ENCODE measurements at regions of chr12 and their contacts with region 1.

Region 1: GRCh38 chr12:42589465-42590329 is at the start of gene PRICKLE1:
- DNase-seq: peak; percentile 69
- H3K4me3 ChIP-seq: peak within 1 kb of the TSS; percentile 81 to 99 (median 86)
- H3K27ac ChIP-seq: peak within 1 kb of the TSS; percentile 59
- H3K4me1 ChIP-seq: peaks cover 38% of the 10 kb centered on the region
- H3K27me3 ChIP-seq: no peaks in the 10 kb centered on the region
- CTCF ChIP-seq: no peak
- POLR2A ChIP-seq: peak; percentile 68
- total RNA-seq, gene PRICKLE1: 69.0 and 86.0 TPM in 2 replicates

Region 2: GRCh38 chr12:42552822-42553221 is 36.9 kb before region 1 on chr12:
- CTCF ChIA-PET with region 1: no interaction called
- POLR2A ChIA-PET with region 1: no interaction called
- dilution Hi-C with region 1: no loop called
- intact Hi-C with region 1: no loop called
- DNase-seq: no peak
- H3K4me3 ChIP-seq: no peak overlapping the region
- H3K27ac ChIP-seq: no peak overlapping the region
- H3K4me1 ChIP-seq: no peaks in the 10 kb centered on the region
- H3K27me3 ChIP-seq: no peaks in the 10 kb centered on the region
- CTCF ChIP-seq: no peak
- POLR2A ChIP-seq: no peak

Region 3: DNA sequence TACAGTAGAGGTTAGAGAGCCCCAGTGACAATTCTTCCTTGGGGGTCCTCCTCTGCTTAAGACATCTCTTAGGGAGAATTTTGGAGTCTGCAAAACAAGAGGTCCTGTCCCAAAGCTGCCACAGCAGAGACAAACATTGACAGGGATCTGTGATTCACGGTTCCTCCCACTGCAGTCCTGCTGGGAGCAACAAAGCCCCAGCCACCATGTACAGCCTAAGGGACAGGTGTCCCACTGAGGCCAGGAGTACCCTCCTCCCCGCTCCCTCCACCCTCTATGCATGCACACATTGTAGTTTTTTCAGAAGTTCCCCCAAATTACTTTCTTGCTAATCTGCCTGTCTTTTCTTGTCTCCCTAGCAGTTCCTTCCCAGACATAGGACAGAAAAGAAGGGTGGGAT is 13.5 kb after region 1 on chr12:
- CTCF ChIA-PET with region 1: no interaction called
- POLR2A ChIA-PET with region 1: no interaction called
- dilution Hi-C with region 1: no loop called
- intact Hi-C with region 1: no loop called
- DNase-seq: no peak
- H3K4me3 ChIP-seq: no peak overlapping the region
- H3K27ac ChIP-seq: no peak overlapping the region
- H3K4me1 ChIP-seq: no peaks in the 10 kb centered on the region
- H3K27me3 ChIP-seq: no peaks in the 10 kb centered on the region
- CTCF ChIP-seq: no peak
- POLR2A ChIP-seq: no peak

Region 4: DNA sequence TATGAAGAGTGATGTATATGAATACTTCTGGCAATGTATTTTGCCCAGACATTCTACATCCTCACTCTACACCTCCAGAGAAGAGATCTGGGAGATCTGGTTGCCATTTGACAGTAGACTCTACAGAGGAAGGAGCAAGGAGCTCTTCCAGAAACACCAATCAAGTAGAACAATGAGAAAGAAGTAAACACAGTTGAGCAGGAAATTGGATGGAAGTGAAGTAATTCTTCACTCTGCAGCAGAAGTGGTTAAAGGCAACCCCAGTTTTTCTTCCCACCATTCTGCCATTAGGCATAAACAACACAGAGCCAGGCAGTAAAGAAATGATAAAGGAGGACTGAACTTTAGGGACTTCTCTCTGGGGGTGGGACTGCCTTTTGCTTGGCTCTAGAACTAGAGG is 48.3 kb after region 1 on chr12:
- CTCF ChIA-PET with region 1: no interaction called
- POLR2A ChIA-PET with region 1: no interaction called
- dilution Hi-C with region 1: no loop called
- intact Hi-C with region 1: loop called (anchors 1 kb)
- DNase-seq: peak; percentile 89
- H3K4me3 ChIP-seq: peak overlapping the region in 1 of 3 experiments; percentile 38
- H3K27ac ChIP-seq: peak overlapping the region; percentile 64
- H3K4me1 ChIP-seq: peaks cover 6% of the 10 kb centered on the region
- H3K27me3 ChIP-seq: no peaks in the 10 kb centered on the region
- CTCF ChIP-seq: no peak
- POLR2A ChIP-seq: no peak

Region 5: DNA sequence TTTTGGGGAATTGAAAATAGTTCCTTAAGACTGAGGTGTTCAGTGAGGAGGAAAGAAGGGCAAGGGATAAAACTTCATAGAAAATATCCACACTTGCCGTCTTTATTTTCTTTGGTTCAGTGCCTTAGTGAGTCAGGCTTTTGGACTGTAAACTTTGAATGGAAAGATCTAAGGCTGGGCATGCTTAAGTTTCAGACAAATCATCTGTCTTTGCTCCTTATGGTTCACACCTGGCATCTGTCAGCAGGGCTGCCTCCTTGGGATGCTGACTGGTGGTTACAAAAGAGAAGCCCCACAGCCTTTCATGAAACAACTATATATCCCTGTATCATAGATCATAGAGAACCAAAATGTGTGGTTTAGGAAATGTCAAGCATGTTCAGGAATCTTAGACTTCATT is 136.1 kb after region 1 on chr12:
- CTCF ChIA-PET with region 1: no interaction called
- POLR2A ChIA-PET with region 1: no interaction called
- dilution Hi-C with region 1: no loop called
- intact Hi-C with region 1: loop called (anchors 5 kb)
- DNase-seq: peak; percentile 64
- H3K4me3 ChIP-seq: no peak overlapping the region
- H3K27ac ChIP-seq: no peak overlapping the region
- H3K4me1 ChIP-seq: peaks cover 6% of the 10 kb centered on the region
- H3K27me3 ChIP-seq: no peaks in the 10 kb centered on the region
- CTCF ChIP-seq: no peak
- POLR2A ChIP-seq: no peak

Region 6: GRCh38 chr12:42790761-42791151 is 201.1 kb after region 1 on chr12:
- CTCF ChIA-PET with region 1: interaction called, 9 read pairs
- POLR2A ChIA-PET with region 1: interaction called, 3 read pairs
- dilution Hi-C with region 1: no loop called
- intact Hi-C with region 1: loop called (anchors 1 kb)
- DNase-seq: peak; percentile 96
- H3K4me3 ChIP-seq: peak overlapping the region in 1 of 3 experiments; percentile 2
- H3K27ac ChIP-seq: peak overlapping the region; percentile 75
- H3K4me1 ChIP-seq: peaks cover 32% of the 10 kb centered on the region
- H3K27me3 ChIP-seq: no peaks in the 10 kb centered on the region
- CTCF ChIP-seq: no peak
- POLR2A ChIP-seq: peak; percentile 60

Region 7: GRCh38 chr12:42961395-42961794 is 371.7 kb after region 1 on chr12:
- CTCF ChIA-PET with region 1: interaction called, 4 read pairs
- POLR2A ChIA-PET with region 1: interaction called, 6 read pairs
- dilution Hi-C with region 1: no loop called
- intact Hi-C with region 1: loop called (anchors 1 kb)
- DNase-seq: peak; percentile 89
- H3K4me3 ChIP-seq: no peak overlapping the region
- H3K27ac ChIP-seq: peak overlapping the region; percentile 81
- H3K4me1 ChIP-seq: peaks cover 72% of the 10 kb centered on the region
- H3K27me3 ChIP-seq: no peaks in the 10 kb centered on the region
- CTCF ChIP-seq: no peak
- POLR2A ChIP-seq: peak; percentile 81

Region 8: GRCh38 chr12:43079476-43079875 is 489.8 kb after region 1 on chr12:
- CTCF ChIA-PET with region 1: no interaction called
- POLR2A ChIA-PET with region 1: no interaction called
- dilution Hi-C with region 1: no loop called
- intact Hi-C with region 1: loop called (anchors 2 kb)
- DNase-seq: peak; percentile 85
- H3K4me3 ChIP-seq: peak overlapping the region in 1 of 3 experiments; percentile 18
- H3K27ac ChIP-seq: peak overlapping the region; percentile 93
- H3K4me1 ChIP-seq: peaks cover 27% of the 10 kb centered on the region
- H3K27me3 ChIP-seq: no peaks in the 10 kb centered on the region
- CTCF ChIP-seq: no peak
- POLR2A ChIP-seq: no peak